ENCODE measurements at regions of chr3 and their contacts with region 1.

Region 1: GRCh38 chr3:36373084-36373483 is 7.2 kb upstream of the STAC start:
- DNase-seq: no peak
- H3K4me3 ChIP-seq: no peak overlapping the region
- H3K27ac ChIP-seq: peak overlapping the region; percentile 20 to 58
- H3K4me1 ChIP-seq: no peaks in the 10 kb centered on the region
- H3K27me3 ChIP-seq: no peaks in the 10 kb centered on the region
- CTCF ChIP-seq: no peak
- POLR2A ChIP-seq: no peak

Region 2: GRCh38 chr3:36700537-36701248 is 327.6 kb after region 1 on chr3:
- intact Hi-C with region 1: loop called (anchors 10 kb)
- DNase-seq: peak in 1 of 2 donors; percentile 37
- H3K4me3 ChIP-seq: no peak overlapping the region
- H3K27ac ChIP-seq: no peak overlapping the region
- H3K4me1 ChIP-seq: no peaks in the 10 kb centered on the region
- H3K27me3 ChIP-seq: no peaks in the 10 kb centered on the region
- CTCF ChIP-seq: peak; percentile 11 to 71 (median 66)
- POLR2A ChIP-seq: no peak

Measured in breast epithelium (tissue), 4 donors.